ENCODE measurements at regions of chr15 and their contacts with region 1.

Region 1: DNA sequence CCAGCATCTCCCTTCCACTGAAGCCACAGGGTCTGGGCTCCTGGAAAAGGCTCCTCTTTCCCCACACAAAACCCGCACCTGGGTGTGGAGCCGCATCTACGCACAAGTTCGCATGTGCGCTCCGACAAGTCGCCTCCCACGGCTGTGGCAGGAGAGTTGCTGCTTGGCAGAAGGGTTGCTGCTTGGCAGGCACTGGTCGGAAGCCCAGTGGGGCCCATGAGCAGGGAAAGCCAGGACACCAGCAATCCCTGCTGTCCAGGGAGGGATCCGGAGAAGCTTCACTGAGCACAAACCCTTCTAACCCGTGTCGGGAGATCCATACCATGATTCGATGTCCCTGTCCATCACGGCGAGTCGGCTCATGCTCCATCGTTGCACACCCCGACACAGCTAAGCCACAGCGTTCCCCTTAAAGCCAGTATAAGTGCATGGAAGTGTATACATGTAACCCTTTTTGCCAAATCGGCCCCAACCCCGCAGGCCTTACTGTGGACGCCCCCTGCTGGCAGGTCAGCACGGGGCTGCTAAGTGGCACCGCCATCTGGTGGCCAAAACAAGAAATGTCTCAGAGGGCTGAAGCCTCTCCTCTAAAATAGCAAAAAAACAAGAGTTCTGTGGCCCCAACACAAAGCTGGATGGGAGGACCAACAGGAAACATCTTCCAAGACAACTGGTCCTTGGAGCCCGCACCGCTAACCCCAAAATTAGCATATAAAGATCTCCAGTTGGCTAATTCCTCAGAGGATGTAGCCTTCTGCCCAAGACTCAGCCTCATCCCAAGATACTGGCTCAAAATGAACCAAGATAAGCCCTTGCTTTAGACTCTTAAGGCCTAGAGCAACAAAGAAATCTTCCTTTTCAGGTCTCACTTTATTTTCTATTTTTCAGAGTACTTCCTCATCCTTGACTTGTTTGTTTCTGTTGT is 8.3 kb downstream of the ANKRD63 start:
- DNase-seq: peak; percentile 90
- H3K4me3 Mint-ChIP-seq: no peak overlapping the region
- H3K27ac Mint-ChIP-seq: peak overlapping the region; percentile 72
- H3K4me1 Mint-ChIP-seq: peaks cover 5% of the 10 kb centered on the region
- H3K27me3 Mint-ChIP-seq: peaks cover 59% of the 10 kb centered on the region

Region 2: GRCh38 chr15:39786447-39787056 is 488.1 kb before region 1 on chr15:
- CTCF ChIA-PET with region 1: interaction called, 18 read pairs
- DNase-seq: no peak
- H3K4me3 Mint-ChIP-seq: no peak overlapping the region
- H3K27ac Mint-ChIP-seq: no peak overlapping the region
- H3K4me1 Mint-ChIP-seq: peaks cover 45% of the 10 kb centered on the region
- H3K27me3 Mint-ChIP-seq: no peaks in the 10 kb centered on the region

Region 3: GRCh38 chr15:40098489-40099261 is 175.9 kb before region 1 on chr15:
- CTCF ChIA-PET with region 1: interaction called, 17 read pairs
- DNase-seq: peak; percentile 86
- H3K4me3 Mint-ChIP-seq: peak overlapping the region; percentile 54
- H3K27ac Mint-ChIP-seq: peak overlapping the region; percentile 98
- H3K4me1 Mint-ChIP-seq: peaks cover 90% of the 10 kb centered on the region
- H3K27me3 Mint-ChIP-seq: no peaks in the 10 kb centered on the region

Region 4: DNA sequence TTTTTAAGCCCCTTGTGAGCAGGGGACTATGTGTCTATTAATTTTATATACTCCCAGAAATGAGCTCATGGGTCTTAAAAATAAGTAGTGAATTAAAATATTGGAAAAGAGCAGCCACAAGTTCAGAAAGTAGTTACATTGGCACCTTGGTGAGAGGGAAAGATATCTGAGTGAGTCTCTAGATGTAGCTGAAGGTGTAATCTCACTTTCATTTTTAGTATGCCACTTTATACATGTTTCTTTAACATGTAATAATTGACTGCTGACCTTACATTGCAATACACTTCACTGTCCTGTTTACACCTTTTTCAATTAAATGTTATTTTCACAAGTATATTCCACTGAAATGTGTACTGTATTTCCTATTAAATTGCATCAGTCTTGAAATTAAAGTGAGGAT is 47.9 kb before region 1 on chr15:
- CTCF ChIA-PET with region 1: interaction called, 24 read pairs
- DNase-seq: no peak
- H3K4me3 Mint-ChIP-seq: no peak overlapping the region
- H3K27ac Mint-ChIP-seq: peak overlapping the region; percentile 15
- H3K4me1 Mint-ChIP-seq: peaks cover 14% of the 10 kb centered on the region
- H3K27me3 Mint-ChIP-seq: no peaks in the 10 kb centered on the region

Region 5: DNA sequence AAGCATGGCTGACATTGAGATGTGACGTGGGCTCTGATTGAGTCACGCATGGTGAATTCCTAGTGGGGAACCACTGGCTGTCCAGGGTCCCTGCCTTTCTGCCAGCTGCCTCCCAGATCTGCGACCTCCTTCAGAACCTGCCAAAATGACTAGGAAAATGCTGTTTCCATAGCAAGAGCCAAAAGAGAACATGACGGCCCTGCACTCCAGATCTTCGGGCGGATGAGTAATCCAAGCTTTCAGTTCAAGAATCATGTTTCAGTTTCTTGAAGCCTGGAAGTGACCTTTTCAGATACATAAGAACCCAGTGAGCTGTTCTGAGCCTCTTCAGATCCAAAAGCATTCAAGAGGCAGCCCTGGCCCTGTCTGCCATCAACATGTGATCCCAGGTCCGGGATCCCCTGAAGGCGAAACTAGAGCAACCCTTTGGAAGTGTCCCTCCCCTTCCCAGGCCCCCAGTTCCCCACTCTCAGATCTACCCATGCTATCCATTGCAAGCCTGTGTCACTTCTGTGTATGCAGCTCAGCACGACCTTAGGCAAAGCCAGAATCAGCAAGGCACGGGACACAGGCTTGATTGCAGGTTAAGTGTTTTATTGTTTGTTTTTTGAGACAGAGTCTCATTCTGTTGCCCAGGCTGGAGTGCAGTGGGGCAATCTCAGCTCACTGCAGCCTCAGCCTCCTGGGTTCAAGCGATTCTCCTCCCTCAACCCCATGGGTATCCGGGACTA is 11.4 kb before region 1 on chr15:
- CTCF ChIA-PET with region 1: interaction called, 35 read pairs
- DNase-seq: no peak
- H3K4me3 Mint-ChIP-seq: no peak overlapping the region
- H3K27ac Mint-ChIP-seq: no peak overlapping the region
- H3K4me1 Mint-ChIP-seq: no peaks in the 10 kb centered on the region
- H3K27me3 Mint-ChIP-seq: peaks cover 44% of the 10 kb centered on the region

Region 6: GRCh38 chr15:40323239-40323952 is 48.8 kb after region 1 on chr15 and contains the start of gene INAFM2:
- CTCF ChIA-PET with region 1: interaction called, 401 read pairs
- DNase-seq: peak; percentile 94
- H3K4me3 Mint-ChIP-seq: peak within 1 kb of the TSS; percentile 71
- H3K27ac Mint-ChIP-seq: no peak within 1 kb of the TSS
- H3K4me1 Mint-ChIP-seq: peaks cover 29% of the 10 kb centered on the region
- H3K27me3 Mint-ChIP-seq: peaks cover 32% of the 10 kb centered on the region